Vagina (tissue), 2 donors: ENCODE measurements at regions of chr3 and their contacts with region 1.

Region 1: GRCh38 chr3:180989291-180990163 is at the start of gene DNAJC19:
- DNase-seq: peak in 1 of 2 donors; percentile 96
- H3K4me3 ChIP-seq: peak within 1 kb of the TSS; percentile 49 to 72
- H3K27ac ChIP-seq: peak within 1 kb of the TSS; percentile 87
- H3K4me1 ChIP-seq: peaks cover 29% of the 10 kb centered on the region
- H3K27me3 ChIP-seq: no peaks in the 10 kb centered on the region
- CTCF ChIP-seq: no peak
- POLR2A ChIP-seq: peak in 1 of 2 donors; percentile 45
- total RNA-seq, gene DNAJC19: 38.1 TPM

Region 2: DNA sequence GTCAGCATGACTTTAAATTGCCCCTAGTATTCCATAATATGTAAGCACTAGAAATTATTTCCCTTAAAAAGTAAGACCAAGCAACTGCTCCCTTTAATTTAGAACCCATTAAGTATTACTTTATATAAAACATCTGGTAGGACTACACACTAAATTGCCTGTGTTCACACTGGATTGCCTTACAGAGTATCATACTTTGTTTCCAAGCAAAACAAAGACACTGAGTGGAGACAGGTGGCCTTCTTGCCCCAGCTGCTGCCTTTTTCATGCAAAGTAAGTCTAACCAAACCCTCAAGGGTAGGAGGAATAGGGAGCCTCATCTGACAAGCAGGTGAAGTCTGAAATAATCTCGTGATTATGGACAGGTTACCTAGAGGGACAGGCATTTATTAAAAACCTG is 1040.1 kb before region 1 on chr3:
- intact Hi-C with region 1: no loop called
- DNase-seq: no peak
- H3K4me3 ChIP-seq: no peak overlapping the region
- H3K27ac ChIP-seq: no peak overlapping the region
- H3K4me1 ChIP-seq: no peaks in the 10 kb centered on the region
- H3K27me3 ChIP-seq: no peaks in the 10 kb centered on the region
- CTCF ChIP-seq: no peak
- POLR2A ChIP-seq: no peak

Region 3: GRCh38 chr3:180633722-180634121 is 355.8 kb before region 1 on chr3:
- intact Hi-C with region 1: no loop called
- DNase-seq: no peak
- H3K4me3 ChIP-seq: no peak overlapping the region
- H3K27ac ChIP-seq: no peak overlapping the region
- H3K4me1 ChIP-seq: no peaks in the 10 kb centered on the region
- H3K27me3 ChIP-seq: no peaks in the 10 kb centered on the region
- CTCF ChIP-seq: no peak
- POLR2A ChIP-seq: no peak

Region 4: DNA sequence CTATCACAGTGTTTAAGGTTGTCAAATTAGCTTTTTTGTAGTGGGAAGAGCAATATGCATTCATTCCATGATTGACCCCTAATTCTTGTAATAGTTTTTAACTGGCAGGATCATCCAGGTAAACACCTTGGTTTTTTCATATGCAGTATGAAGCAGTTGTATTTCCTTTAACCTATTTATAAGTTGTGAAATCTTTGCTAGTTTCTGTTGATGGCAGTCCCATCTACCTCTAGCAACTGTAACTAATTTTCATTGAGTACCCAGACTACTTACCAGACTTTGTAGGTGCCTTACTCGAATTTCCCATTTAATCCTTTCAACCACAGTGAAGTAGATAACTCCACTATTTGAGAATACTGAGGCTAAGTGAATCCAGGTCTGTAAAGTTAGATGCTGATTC is 71.0 kb before region 1 on chr3:
- intact Hi-C with region 1: no loop called
- DNase-seq: no peak
- H3K4me3 ChIP-seq: no peak overlapping the region
- H3K27ac ChIP-seq: no peak overlapping the region
- H3K4me1 ChIP-seq: peaks cover 53% of the 10 kb centered on the region
- H3K27me3 ChIP-seq: no peaks in the 10 kb centered on the region
- CTCF ChIP-seq: no peak
- POLR2A ChIP-seq: no peak

Region 5: DNA sequence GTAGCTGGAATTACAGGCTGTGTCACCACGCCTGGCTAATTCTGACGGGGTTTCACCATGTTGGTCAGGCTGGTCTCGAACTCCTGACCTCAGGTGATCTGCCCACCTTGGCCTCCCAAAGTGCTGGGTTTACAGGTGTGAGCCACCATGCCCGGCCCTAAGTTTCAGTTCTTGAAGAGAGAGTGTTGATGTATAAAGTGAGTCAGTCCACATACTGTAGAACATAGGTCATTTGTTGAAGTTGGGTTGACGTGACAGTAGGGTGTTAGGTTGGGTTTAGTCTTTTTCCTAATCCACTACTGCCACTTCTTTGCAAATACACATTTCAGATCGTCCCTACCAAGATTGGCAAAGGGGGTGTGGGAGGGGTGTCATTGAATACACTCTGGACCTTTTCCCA is 15.2 kb before region 1 on chr3:
- intact Hi-C with region 1: loop called (anchors 2 kb)
- DNase-seq: no peak
- H3K4me3 ChIP-seq: no peak overlapping the region
- H3K27ac ChIP-seq: no peak overlapping the region
- H3K4me1 ChIP-seq: no peaks in the 10 kb centered on the region
- H3K27me3 ChIP-seq: no peaks in the 10 kb centered on the region
- CTCF ChIP-seq: no peak
- POLR2A ChIP-seq: no peak